Activated naive CD4-positive, alpha-beta T cell treated with anti-CD3 and anti-CD28 coated beads for 36 hours (primary cell): ENCODE measurements at regions of chr14 and their contacts with region 1.

Region 1: DNA sequence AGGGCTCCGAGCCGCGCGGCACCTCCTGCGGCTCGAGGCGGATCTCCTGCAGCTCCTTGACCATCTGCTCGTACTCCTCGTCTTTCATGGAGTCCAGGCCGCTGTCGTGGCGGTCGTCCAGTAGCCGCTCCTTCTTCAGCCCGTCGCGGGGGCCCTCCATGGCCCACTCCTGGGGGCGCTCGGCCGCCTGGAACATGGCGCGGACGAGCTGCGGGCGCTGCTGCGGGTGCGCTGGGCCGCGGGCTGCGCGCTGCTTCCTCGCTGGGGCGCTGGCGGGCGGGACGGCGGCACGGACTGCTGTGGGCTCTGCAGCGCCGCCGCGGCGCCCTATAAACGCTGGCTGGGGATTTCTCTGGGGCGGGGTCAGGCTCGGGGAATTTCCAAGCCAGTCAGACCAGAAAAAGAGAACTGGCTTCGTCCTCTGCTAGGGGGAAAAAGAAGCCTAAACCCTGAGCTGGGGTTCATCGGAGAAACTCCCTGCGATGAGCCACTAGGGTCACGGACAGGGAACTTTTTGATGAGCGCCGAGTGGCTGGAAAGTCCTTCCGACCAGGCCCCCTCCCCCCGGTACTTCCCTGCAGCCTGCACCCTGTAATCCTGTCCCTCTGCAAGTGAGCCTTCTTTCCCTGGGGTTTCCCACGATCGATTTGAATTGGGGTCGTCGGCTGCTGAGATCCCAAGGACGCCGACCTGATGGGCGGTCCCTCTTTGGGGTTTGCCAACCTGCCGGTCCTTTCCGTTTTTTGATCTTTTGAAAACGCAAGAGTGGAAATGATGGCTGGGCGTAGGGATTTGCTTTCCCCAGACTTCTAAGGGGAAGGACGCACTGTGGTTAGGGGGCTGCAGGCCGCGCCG is at the start of gene NFKBIA:
- DNase-seq: peak; percentile 96
- H3K4me3 Mint-ChIP-seq: peak within 1 kb of the TSS; percentile 98
- H3K27ac Mint-ChIP-seq: peak within 1 kb of the TSS; percentile 99
- H3K4me1 Mint-ChIP-seq: peaks cover 31% of the 10 kb centered on the region
- H3K27me3 Mint-ChIP-seq: no peaks in the 10 kb centered on the region
- total RNA-seq, gene NFKBIA: 289 to 293 TPM

Region 2: DNA sequence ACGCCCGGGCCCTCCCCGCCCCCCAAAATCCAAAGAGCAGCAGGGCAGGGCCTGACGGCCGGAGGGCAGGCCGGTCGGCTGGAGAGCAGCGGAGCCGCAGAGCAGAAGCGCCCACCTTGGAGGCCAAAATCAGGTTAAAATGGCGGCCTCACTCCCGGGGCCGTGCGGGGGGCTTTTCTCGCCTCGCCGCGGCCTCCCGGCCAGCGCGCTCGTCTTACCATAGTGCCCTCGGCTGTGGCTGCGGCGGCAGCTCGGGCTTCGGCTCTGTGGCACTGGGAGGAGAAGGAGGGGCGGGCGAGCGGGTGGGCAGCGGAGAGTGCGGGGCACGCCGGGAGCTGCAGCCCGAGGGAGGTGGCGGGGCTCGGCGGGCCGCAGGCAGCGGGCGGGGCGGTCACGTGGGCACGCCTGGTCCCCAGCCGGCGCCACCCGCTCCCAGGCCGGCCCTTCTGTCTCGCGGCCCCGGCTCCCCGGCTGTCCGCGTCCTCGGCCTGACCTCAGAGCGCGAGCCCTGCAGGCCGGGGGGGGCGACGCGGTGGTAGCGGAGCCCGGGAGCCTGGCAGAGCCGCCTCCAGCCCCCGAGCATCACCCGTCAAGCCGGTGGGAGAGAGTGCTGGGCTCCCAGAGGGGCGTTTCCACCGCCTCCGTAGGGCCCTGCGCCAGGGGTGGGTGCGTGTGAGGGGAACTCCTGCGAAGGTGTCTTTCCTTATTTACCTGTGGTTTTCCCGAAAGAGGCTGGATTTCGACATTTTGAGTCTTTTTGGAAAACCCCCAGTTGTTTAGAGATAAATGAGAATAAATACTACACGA is 690.2 kb before region 1 on chr14 and contains the start of gene CFL2:
- CTCF ChIA-PET with region 1: no interaction called
- intact Hi-C with region 1: loop called (anchors 1 kb)
- DNase-seq: peak; percentile 75
- H3K4me3 Mint-ChIP-seq: peak within 1 kb of the TSS; percentile 81
- H3K27ac Mint-ChIP-seq: peak within 1 kb of the TSS; percentile 82
- H3K4me1 Mint-ChIP-seq: peaks cover 18% of the 10 kb centered on the region
- H3K27me3 Mint-ChIP-seq: no peaks in the 10 kb centered on the region
- total RNA-seq, gene CFL2: 3.1 to 4.5 TPM

Region 3: GRCh38 chr14:34865889-34866574 is 538.6 kb before region 1 on chr14:
- CTCF ChIA-PET with region 1: no interaction called
- intact Hi-C with region 1: no loop called
- DNase-seq: no peak
- H3K4me3 Mint-ChIP-seq: no peak overlapping the region
- H3K27ac Mint-ChIP-seq: no peak overlapping the region
- H3K4me1 Mint-ChIP-seq: peaks cover 38% of the 10 kb centered on the region
- H3K27me3 Mint-ChIP-seq: no peaks in the 10 kb centered on the region

Region 4: DNA sequence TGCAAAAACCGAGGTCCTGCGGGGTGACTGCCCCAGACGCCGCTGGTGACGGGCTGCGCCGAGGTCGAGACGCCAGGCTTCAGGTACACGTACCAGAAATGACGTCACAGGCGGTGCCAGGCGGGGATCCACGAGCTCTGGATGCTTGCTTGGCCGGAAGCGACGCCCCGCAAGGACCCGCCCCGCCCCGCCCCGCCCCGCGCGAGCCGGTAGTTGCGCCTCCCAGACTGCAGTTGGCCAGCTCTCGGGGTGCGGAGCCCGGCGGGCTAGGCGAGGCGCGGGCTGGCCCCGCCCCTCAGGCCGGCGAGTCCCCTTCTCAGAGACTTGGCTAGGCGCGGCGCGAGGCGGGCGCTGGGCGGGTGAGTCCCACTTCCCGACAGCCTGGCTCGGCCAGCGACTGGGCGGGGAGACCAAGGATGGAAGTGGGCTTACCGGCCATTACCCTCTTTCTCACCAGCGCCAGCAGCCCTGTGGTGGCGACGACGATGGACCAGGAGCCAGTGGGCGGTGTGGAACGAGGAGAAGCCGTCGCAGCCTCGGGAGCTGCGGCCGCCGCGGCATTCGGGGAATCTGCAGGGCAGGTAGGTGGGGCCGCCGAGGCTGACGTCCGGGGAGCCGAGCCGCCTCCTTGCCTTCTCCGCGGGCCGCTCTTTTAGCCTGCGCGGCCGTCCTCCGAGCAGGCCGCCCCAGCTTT is 358.5 kb before region 1 on chr14 and contains the start of gene FAM177A1:
- CTCF ChIA-PET with region 1: no interaction called
- intact Hi-C with region 1: loop called (anchors 1 kb)
- DNase-seq: peak; percentile 99
- H3K4me3 Mint-ChIP-seq: peak within 1 kb of the TSS; percentile 89
- H3K27ac Mint-ChIP-seq: peak within 1 kb of the TSS; percentile 98
- H3K4me1 Mint-ChIP-seq: peaks cover 25% of the 10 kb centered on the region
- H3K27me3 Mint-ChIP-seq: no peaks in the 10 kb centered on the region
- total RNA-seq, gene FAM177A1: 55.0 to 58.5 TPM

Region 5: DNA sequence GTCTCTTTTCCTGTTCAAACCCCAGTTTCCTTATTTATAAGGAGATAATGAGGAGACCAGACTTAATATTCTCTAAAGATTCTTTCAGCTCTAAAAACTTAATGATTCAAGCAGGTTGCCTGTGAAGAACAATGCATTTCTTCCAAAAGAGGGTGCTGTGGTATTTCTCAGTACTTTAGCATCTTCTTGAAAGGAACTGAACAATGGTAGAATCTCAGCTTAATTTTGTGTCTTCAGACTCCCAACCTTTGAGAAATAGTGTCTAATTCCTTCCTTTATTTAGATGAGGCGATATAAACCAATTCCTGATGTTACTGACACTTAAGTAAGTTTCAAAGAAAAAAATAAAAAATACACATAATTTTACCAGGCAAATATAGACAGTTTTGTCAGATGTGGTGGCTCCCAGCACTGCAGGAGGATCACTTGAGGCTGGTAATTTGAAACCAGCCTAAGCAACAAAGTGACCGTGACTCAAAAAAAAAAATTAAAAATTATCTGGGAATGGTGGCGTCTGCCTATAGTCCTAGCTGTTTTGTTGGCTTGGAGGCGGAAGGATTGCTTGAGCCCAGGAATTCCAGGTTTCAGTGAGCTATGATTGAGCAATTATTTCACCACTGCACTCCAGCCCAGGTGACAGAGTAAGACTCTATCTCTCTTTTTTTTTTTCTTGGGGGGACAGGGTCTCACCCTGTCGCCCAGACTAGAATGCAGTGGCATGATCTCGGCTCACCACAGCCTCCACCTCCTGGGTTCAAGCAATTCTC is 189.4 kb before region 1 on chr14:
- CTCF ChIA-PET with region 1: interaction called, 6 read pairs
- intact Hi-C with region 1: loop called (anchors 1 kb)
- DNase-seq: no peak
- H3K4me3 Mint-ChIP-seq: no peak overlapping the region
- H3K27ac Mint-ChIP-seq: no peak overlapping the region
- H3K4me1 Mint-ChIP-seq: peaks cover 7% of the 10 kb centered on the region
- H3K27me3 Mint-ChIP-seq: no peaks in the 10 kb centered on the region

Region 6: GRCh38 chr14:35285168-35286002 is 119.3 kb before region 1 on chr14:
- CTCF ChIA-PET with region 1: interaction called, 30 read pairs
- intact Hi-C with region 1: loop called (anchors 1 kb)
- DNase-seq: peak; percentile 47
- H3K4me3 Mint-ChIP-seq: peak overlapping the region; percentile 35
- H3K27ac Mint-ChIP-seq: peak overlapping the region; percentile 96
- H3K4me1 Mint-ChIP-seq: peaks cover 55% of the 10 kb centered on the region
- H3K27me3 Mint-ChIP-seq: no peaks in the 10 kb centered on the region

Region 7: DNA sequence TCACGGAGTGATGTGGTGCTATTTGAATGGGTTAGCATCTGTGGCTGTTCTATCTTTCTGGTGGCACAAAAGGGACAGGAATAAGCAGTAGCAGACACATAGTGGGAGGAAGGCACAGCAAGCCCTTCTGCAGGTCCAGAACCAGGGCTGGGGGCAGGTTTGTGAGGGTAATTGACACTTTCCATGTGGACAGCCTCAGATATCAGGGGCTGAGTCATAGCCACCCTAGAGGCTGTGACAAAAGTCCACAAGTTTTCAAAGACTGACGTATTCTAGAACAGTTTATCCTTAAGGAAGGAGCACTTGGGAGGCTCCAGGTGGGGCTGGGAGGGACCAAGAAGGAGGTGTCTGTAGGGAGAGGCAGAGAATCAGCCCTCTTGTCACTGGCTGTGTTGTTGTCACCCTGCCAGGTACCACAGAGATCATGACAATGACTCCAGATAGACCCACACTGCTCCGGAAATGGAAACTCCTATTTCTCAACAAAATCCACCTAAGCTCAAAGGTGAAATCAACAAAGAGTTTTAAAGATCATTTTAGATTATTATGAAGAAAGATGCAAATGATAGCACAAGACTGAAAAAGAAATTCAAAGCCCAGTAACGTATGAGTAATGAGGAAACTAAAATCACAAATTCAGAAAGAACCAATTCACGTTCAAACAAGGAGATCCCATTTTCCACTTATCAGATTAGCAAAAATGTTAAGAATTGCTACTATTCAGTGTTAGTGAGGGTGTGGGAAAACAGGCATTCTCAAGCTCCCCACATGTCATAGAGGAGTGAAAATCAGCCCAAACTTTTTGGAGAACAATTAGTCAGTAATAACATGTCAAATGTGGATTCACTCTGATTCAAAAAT is 48.5 kb before region 1 on chr14:
- CTCF ChIA-PET with region 1: no interaction called
- intact Hi-C with region 1: loop called (anchors 1 kb)
- DNase-seq: peak; percentile 86
- H3K4me3 Mint-ChIP-seq: peak overlapping the region; percentile 12
- H3K27ac Mint-ChIP-seq: peak overlapping the region; percentile 91
- H3K4me1 Mint-ChIP-seq: peaks cover 46% of the 10 kb centered on the region
- H3K27me3 Mint-ChIP-seq: no peaks in the 10 kb centered on the region

Region 8: GRCh38 chr14:35430459-35431198 is 26.0 kb after region 1 on chr14:
- CTCF ChIA-PET with region 1: no interaction called
- intact Hi-C with region 1: no loop called
- DNase-seq: no peak
- H3K4me3 Mint-ChIP-seq: no peak overlapping the region
- H3K27ac Mint-ChIP-seq: no peak overlapping the region
- H3K4me1 Mint-ChIP-seq: peaks cover 20% of the 10 kb centered on the region
- H3K27me3 Mint-ChIP-seq: no peaks in the 10 kb centered on the region